ENCODE measurements at regions of chr10 and their contacts with region 1.

Region 1: DNA sequence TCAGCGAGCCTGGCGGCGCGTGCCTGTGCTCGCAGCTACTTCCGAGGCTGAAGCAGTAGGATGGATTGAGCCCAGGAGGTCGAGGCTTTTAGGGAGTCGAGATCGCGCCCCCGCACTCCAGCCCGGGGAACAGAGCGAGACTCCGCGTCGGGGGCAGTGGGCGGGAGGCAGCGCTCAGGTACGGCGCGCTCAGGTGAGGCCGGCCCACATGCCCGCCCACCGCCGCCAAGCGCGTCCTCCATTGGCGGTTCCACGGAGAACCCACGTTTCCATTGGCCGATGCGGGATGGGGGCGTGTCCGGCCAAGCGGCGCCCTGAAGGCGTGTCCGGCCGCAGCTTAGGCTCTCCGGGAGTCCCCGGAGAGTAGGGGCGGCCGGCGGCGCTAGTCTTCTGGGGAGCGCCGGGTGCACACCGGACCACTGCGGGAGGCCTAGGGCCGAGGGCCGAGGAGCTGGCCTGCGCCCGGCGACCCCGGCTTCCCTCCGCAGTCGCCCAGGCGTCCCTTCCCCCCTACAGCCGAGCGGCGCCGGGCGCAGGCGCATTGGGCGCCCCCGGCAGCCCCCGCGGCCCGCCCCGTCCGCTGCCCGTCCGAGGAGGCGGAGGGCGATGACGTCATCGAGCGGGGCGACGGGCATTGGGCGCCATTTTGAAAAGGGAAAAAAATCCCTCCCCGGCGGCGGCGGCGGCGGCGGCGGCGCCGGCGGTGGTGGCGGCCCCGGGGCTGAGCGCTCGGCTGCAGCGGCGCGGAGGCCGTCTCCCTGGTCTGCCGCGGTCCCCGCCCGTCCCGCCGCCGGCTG is at the start of gene PPP2R2D:
- DNase-seq: peak; percentile 98
- CTCF ChIP-seq: no peak

Region 2: DNA sequence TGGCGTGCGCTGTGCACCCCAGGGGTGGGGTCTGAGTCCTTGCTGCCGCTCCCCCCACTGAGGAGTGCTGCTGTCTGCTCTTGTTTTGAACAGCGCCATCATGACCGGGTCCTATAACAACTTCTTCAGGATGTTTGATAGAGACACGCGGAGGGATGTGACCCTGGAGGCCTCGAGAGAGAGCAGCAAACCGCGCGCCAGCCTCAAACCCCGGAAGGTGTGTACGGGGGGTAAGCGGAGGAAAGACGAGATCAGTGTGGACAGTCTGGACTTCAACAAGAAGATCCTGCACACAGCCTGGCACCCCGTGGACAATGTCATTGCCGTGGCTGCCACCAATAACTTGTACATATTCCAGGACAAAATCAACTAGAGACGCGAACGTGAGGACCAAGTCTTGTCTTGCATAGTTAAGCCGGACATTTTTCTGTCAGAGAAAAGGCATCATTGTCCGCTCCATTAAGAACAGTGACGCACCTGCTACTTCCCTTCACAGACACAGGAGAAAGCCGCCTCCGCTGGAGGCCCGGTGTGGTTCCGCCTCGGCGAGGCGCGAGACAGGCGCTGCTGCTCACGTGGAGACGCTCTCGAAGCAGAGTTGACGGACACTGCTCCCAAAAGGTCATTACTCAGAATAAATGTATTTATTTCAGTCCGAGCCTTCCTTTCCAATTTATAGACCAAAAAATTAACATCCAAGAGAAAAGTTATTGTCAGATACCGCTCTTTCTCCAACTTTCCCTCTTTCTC is 55.2 kb after region 1 on chr10:
- CTCF ChIA-PET with region 1: no interaction called
- POLR2A ChIA-PET with region 1: no interaction called
- DNase-seq: no peak
- CTCF ChIP-seq: no peak

Region 3: GRCh38 chr10:132233501-132234085 is 333.0 kb after region 1 on chr10:
- CTCF ChIA-PET with region 1: no interaction called
- POLR2A ChIA-PET with region 1: interaction called, 11 read pairs
- DNase-seq: no peak
- CTCF ChIP-seq: no peak

Measured in GM10248 (cell line).